Caco-2 (cell line): ENCODE measurements at regions of chr6 and their contacts with region 1.

Region 1: DNA sequence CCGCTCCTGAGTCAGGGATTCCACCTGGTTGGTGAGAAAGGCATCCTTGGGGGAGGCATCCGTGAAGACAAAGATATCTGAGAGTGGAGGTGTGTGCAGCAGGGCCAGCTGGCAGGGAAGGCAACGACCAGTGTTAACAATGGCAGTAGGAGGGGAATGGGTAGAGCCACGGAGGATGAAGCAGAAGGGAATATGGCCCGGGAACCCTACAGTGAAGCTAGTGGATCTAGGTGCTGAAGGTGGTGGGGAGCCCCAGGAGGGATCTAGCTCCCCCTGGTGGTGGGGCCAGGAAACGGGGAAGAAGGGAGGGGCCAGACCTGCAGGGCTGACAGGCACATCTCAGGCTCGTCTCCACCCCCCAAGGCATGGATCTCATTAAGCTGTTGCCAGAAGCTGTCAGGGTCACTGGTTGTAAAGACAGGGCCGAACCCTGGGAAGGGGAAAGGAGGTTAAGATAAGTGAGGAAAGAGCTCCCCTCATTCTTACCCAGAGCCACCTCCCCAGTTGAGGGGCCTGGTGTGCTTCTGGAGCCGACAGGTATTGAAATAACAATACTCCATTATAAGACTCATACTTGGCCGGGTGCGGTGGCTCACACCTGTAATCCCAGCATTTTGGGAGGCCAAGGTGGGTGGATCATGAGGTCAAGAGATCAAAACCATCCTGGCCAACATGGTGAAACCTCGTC is 7.3 kb downstream of the VWA7 start:
- DNase-seq: peak; percentile 85 to 89
- H3K4me3 ChIP-seq: no peak overlapping the region
- H3K4me3 Mint-ChIP-seq: no peak overlapping the region
- H3K27ac Mint-ChIP-seq: no peak overlapping the region
- H3K4me1 ChIP-seq: peaks cover 15% of the 10 kb centered on the region
- H3K4me1 Mint-ChIP-seq: peaks cover 8% of the 10 kb centered on the region
- H3K27me3 ChIP-seq: no peaks in the 10 kb centered on the region
- H3K27me3 Mint-ChIP-seq: no peaks in the 10 kb centered on the region
- CTCF ChIP-seq: peak; percentile 85 to 87

Region 2: DNA sequence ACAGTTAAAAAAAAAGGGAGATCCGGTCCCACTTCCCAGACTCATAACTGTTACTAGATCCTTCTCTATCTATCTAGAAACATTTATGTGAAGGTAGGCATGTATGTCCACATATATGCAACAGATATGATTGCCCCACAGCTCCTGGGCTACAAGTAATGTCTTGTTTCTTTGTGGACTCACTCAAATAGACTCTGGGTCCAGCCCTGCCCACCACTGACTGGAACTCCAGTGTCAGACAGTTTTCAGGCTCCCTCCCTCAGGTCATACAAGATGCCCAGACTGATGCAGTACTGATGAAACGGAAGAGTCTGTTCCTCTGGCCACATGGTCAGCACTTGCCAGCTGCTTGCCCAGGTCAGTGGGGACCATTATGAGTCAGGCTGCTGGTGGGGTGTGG is 994.7 kb before region 1 on chr6:
- CTCF ChIA-PET with region 1: no interaction called
- POLR2A ChIA-PET with region 1: no interaction called
- intact Hi-C with region 1: no loop called
- DNase-seq: no peak
- H3K4me3 ChIP-seq: no peak overlapping the region
- H3K4me3 Mint-ChIP-seq: no peak overlapping the region
- H3K27ac Mint-ChIP-seq: no peak overlapping the region
- H3K4me1 ChIP-seq: peaks cover 19% of the 10 kb centered on the region
- H3K4me1 Mint-ChIP-seq: peaks cover 16% of the 10 kb centered on the region
- H3K27me3 ChIP-seq: no peaks in the 10 kb centered on the region
- H3K27me3 Mint-ChIP-seq: no peaks in the 10 kb centered on the region
- CTCF ChIP-seq: no peak

Region 3: DNA sequence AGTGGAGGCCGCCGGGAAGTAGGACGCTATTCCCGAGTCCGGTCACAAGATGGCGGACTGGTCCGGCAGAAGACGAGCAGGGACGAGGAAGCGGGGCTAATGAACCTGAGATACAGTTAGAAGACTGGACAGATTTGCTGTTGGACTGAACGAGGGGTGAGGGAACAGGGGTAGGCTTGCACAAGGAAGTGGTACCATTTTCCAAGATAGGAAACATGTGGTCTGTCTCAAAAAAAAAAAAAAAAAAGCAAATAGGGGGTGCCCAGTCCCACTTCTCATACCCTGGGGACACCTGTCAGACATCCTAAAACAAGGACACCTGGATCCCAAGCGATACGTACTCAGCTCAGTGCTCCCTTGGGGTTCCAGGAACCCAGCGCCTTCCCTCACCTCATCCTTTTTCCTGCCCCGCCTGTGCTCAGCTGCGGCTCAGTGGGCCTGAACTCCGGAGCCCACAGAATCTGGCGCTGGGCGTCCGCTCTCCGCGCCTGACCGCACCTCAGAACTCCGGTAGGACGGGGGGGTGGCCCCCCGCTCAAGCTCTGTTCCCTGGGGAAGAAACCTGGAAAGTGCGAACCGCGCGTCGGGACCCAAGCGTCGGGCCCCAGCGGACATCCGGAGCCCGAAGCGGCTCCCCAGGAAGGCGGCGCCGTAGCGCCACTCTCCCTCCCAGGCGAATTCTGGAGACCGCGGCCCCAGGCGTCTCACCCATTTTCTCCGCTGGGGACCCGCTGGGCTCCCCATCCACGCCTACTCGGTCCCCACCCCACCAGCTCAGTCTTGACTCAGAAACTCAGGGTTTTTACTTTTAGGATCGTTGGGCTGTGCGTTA is 88.8 kb before region 1 on chr6 and contains the start of gene LY6G5C:
- CTCF ChIA-PET with region 1: interaction called, 14 read pairs
- POLR2A ChIA-PET with region 1: no interaction called
- intact Hi-C with region 1: loop called (anchors 1 kb)
- DNase-seq: peak; percentile 85 to 87
- H3K4me3 ChIP-seq: peak within 1 kb of the TSS; percentile 49
- H3K4me3 Mint-ChIP-seq: peak within 1 kb of the TSS; percentile 76
- H3K27ac Mint-ChIP-seq: peak within 1 kb of the TSS; percentile 54
- H3K4me1 ChIP-seq: peaks cover 25% of the 10 kb centered on the region
- H3K4me1 Mint-ChIP-seq: peaks cover 17% of the 10 kb centered on the region
- H3K27me3 ChIP-seq: no peaks in the 10 kb centered on the region
- H3K27me3 Mint-ChIP-seq: no peaks in the 10 kb centered on the region
- CTCF ChIP-seq: peak; percentile 66 to 81
- total RNA-seq, gene LY6G5C: 2.0 and 2.9 TPM in 2 replicates